ENCODE measurements at regions of chr5 and their contacts with region 1.

Region 1: GRCh38 chr5:135106610-135107471 is 72.8 kb upstream of the PITX1 start:
- DNase-seq: no peak
- ATAC-seq: no peak
- H3K4me3 ChIP-seq: no peak overlapping the region
- H3K27ac ChIP-seq: no peak overlapping the region
- H3K4me1 ChIP-seq: peaks cover 8% of the 10 kb centered on the region
- H3K27me3 ChIP-seq: no peaks in the 10 kb centered on the region
- CTCF ChIP-seq: no peak

Region 2: GRCh38 chr5:134594797-134595457 is 511.9 kb before region 1 on chr5:
- CTCF ChIA-PET with region 1: no interaction called
- POLR2A ChIA-PET with region 1: no interaction called
- intact Hi-C with region 1: no loop called
- DNase-seq: no peak
- ATAC-seq: no peak
- H3K4me3 ChIP-seq: no peak overlapping the region
- H3K27ac ChIP-seq: no peak overlapping the region
- H3K4me1 ChIP-seq: peaks cover 24% of the 10 kb centered on the region
- H3K27me3 ChIP-seq: no peaks in the 10 kb centered on the region
- CTCF ChIP-seq: no peak

Region 3: GRCh38 chr5:134803821-134804220 is 303.0 kb before region 1 on chr5:
- CTCF ChIA-PET with region 1: no interaction called
- POLR2A ChIA-PET with region 1: no interaction called
- intact Hi-C with region 1: no loop called
- DNase-seq: no peak
- ATAC-seq: no peak
- H3K4me3 ChIP-seq: no peak overlapping the region
- H3K27ac ChIP-seq: no peak overlapping the region
- H3K4me1 ChIP-seq: no peaks in the 10 kb centered on the region
- H3K27me3 ChIP-seq: no peaks in the 10 kb centered on the region
- CTCF ChIP-seq: no peak

Region 4: GRCh38 chr5:135120951-135121350 is 14.1 kb after region 1 on chr5:
- CTCF ChIA-PET with region 1: no interaction called
- POLR2A ChIA-PET with region 1: no interaction called
- intact Hi-C with region 1: no loop called
- DNase-seq: no peak
- ATAC-seq: no peak
- H3K4me3 ChIP-seq: no peak overlapping the region
- H3K27ac ChIP-seq: no peak overlapping the region
- H3K4me1 ChIP-seq: no peaks in the 10 kb centered on the region
- H3K27me3 ChIP-seq: no peaks in the 10 kb centered on the region
- CTCF ChIP-seq: no peak

Region 5: GRCh38 chr5:135181653-135182052 is 74.8 kb after region 1 on chr5:
- CTCF ChIA-PET with region 1: no interaction called
- POLR2A ChIA-PET with region 1: interaction called, 17 read pairs
- intact Hi-C with region 1: no loop called
- DNase-seq: no peak
- ATAC-seq: no peak
- H3K4me3 ChIP-seq: no peak overlapping the region
- H3K27ac ChIP-seq: no peak overlapping the region
- H3K4me1 ChIP-seq: peaks cover 2% of the 10 kb centered on the region
- H3K27me3 ChIP-seq: no peaks in the 10 kb centered on the region
- CTCF ChIP-seq: no peak